GM12878 (cell line): ENCODE measurements at regions of chr2 and their contacts with region 1.

Region 1: DNA sequence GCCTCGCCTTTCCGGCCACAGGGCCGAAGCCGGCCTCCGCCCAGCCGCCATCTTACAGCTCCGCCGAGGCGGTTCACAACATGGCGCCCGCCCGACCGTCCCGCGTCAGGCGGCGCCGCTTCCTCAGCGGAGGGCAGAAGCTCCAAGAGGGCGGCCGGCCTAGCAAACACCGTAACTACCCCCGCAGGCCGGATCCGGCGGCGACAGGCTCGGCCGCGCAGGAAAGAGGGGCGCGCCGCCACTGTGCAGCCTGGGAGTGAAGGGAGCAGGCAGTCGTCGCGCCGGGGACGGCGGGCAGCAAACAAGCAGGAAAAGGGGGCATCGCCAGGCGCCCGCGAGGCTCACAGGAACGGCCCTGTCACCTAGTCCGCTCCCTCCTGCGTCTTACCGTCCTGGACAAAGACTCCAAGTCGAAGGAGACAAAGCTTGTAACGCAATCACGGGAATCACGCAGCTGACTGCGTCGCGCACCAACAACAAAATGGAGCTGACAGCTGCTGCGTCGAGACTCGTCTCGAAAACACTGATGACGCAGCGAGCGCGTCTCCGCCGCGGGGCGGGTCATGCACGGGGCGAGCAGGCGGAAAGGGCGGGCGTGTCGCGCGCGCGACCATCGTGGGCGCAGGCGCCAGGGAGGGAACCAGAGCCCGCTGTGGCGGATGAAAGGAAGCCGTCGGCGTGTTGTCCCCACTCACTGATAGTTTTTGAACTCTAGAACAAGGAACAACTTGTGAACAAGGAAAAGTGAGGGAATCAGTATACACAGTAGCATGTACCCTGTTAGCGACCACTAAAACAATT is at the start of gene CLK1:
- DNase-seq: peak; percentile 74
- ATAC-seq: peak; percentile 88
- H3K4me3 ChIP-seq: peak within 1 kb of the TSS; percentile 100
- H3K27ac ChIP-seq: peak within 1 kb of the TSS; percentile 100
- H3K4me1 ChIP-seq: no peaks in the 10 kb centered on the region
- H3K27me3 ChIP-seq: no peaks in the 10 kb centered on the region
- CTCF ChIP-seq: no peak
- EP300 ChIP-seq: 0 out of 4 replicates have a peak, but pooled peaks of 1 of the 2 experiments have one; percentile 52
- POLR2A ChIP-seq: peak; percentile 99
- RAD21 ChIP-seq: no peak
- polyA plus RNA-seq, gene CLK1: 95.6 to 138 TPM

Region 2: DNA sequence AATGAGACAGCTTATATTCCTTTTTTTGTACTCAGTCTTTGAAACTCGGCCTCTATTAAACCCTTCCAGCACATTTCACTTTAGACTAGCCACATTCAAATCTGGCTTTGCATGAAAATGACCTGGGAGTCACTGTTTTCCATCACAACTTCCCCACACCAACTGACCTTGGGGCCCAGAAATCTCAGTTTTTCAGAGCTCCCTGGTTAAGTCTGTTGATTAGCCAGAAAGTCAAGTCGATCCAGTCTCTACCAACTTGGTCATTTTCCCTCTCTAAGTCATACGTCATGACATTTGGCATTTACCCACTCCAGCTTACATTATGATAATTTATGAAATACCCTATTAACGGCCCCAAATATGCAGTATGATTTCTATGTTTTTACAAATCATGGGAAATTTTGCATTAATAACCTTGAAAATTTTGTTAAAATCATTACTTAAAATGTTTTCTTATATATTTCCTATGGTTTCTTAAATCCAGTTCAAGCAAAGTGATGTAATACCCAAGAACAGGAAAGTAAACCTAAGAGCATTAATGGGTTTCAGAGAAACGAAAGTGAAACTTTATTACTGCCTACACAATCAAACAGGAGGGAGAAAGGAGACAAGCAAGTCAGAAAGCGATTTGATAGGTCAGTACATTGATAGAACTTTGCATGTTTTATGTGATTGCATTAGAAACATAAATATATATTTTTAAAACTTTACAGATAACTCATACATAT is 480.8 kb before region 1 on chr2:
- CTCF ChIA-PET with region 1: no interaction called
- POLR2A ChIA-PET with region 1: no interaction called
- RAD21 ChIA-PET with region 1: no interaction called
- SMC1A ChIA-PET with region 1: no interaction called
- in situ Hi-C with region 1: no loop called
- intact Hi-C with region 1: no loop called
- DNase-seq: peak; percentile 60
- ATAC-seq: peak; percentile 93
- H3K4me3 ChIP-seq: no peak overlapping the region; the same call in 1 of the 2 replicates
- H3K27ac ChIP-seq: peak overlapping the region; percentile 76
- H3K4me1 ChIP-seq: peaks cover 23% of the 10 kb centered on the region
- H3K27me3 ChIP-seq: no peaks in the 10 kb centered on the region
- CTCF ChIP-seq: no peak
- EP300 ChIP-seq: no peak
- POLR2A ChIP-seq: no peak
- RAD21 ChIP-seq: no peak

Region 3: DNA sequence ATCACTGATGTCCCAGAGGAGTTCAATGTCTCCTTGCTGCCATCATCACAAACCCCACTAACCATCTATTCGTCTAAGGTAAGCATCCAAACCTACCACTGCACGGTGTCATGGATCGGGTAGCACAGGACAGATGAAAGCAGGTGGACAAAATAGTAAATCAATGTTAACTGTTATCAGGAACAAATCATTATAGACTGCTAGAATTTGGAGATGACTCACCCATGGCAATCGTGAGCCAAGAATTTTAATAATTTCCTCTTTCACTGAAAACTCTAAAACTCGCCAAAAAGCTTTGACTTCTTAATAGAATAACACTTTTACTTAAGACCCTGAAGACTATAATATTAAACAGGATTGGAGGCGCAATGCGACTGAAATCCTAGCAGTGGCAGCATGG is 86.3 kb before region 1 on chr2:
- CTCF ChIA-PET with region 1: no interaction called
- POLR2A ChIA-PET with region 1: no interaction called
- RAD21 ChIA-PET with region 1: no interaction called
- SMC1A ChIA-PET with region 1: no interaction called
- in situ Hi-C with region 1: no loop called
- intact Hi-C with region 1: no loop called
- DNase-seq: no peak
- ATAC-seq: no peak
- H3K4me3 ChIP-seq: no peak overlapping the region
- H3K27ac ChIP-seq: no peak overlapping the region
- H3K4me1 ChIP-seq: no peaks in the 10 kb centered on the region
- H3K27me3 ChIP-seq: peaks cover 0 to 3% of the 10 kb centered on the region in 2 experiments; a peak in 2 of 4 replicates
- CTCF ChIP-seq: no peak
- EP300 ChIP-seq: no peak
- POLR2A ChIP-seq: no peak
- RAD21 ChIP-seq: no peak

Region 4: DNA sequence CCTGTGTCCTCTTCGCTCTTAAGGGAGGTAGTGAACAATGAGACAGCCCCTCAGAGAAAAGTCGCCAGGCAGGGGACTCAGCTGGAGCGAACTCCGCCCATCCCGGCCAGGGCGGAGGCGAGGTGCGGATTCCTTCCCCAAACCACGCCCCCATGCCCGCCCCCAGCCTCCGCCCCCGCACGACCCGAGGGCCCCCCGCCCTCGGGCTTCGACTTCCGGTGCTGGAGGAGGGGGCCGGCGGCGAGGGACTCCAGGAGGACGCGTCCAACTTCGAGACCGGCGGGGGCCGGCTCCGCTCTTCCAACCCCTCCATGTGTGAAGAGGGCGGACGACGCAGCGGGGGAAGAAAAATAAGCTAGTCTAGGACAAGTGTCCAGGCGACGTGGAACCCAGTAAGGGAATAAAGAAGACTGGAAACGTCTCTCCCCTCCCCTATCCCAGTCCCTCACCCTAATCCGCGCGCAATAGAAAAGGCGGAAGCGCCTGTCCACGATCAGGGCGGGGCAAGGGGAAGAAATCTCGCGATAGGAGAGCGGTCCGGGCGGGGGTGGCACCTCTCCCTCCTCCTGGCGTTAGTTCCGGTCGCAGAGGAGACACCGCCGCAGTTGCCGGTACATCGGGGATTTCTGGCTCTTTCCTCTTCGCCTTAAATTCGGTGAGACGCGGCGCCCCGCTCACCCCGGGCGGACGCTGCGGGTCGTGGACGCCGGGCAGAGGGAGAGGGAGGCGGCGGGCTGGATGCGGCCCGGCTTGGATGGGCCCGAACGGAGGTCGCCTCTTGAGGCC is 52.8 kb before region 1 on chr2 and contains the start of gene BZW1:
- CTCF ChIA-PET with region 1: interaction called, 4 read pairs
- POLR2A ChIA-PET with region 1: interaction called, 11 read pairs
- RAD21 ChIA-PET with region 1: interaction called, 4 read pairs
- SMC1A ChIA-PET with region 1: interaction called, 9 read pairs
- in situ Hi-C with region 1: no loop called
- intact Hi-C with region 1: loop called (anchors 2 kb)
- DNase-seq: peak; percentile 88
- ATAC-seq: peak; percentile 86
- H3K4me3 ChIP-seq: peak within 1 kb of the TSS; percentile 88
- H3K27ac ChIP-seq: peak within 1 kb of the TSS; percentile 100
- H3K4me1 ChIP-seq: peaks cover 19% of the 10 kb centered on the region
- H3K27me3 ChIP-seq: no peaks in the 10 kb centered on the region
- CTCF ChIP-seq: no peak
- EP300 ChIP-seq: 0 out of 4 replicates have a peak, but pooled peaks of 1 of the 2 experiments have one; percentile 5
- POLR2A ChIP-seq: peak; percentile 90
- RAD21 ChIP-seq: no peak
- polyA plus RNA-seq, gene BZW1: 200 to 317 TPM

Region 5: GRCh38 chr2:200834701-200835100 is 29.7 kb before region 1 on chr2:
- CTCF ChIA-PET with region 1: no interaction called
- POLR2A ChIA-PET with region 1: no interaction called
- RAD21 ChIA-PET with region 1: no interaction called
- SMC1A ChIA-PET with region 1: no interaction called
- in situ Hi-C with region 1: no loop called
- intact Hi-C with region 1: no loop called
- DNase-seq: no peak
- ATAC-seq: no peak
- H3K4me3 ChIP-seq: no peak overlapping the region
- H3K27ac ChIP-seq: no peak overlapping the region
- H3K4me1 ChIP-seq: no peaks in the 10 kb centered on the region
- H3K27me3 ChIP-seq: no peaks in the 10 kb centered on the region
- CTCF ChIP-seq: no peak
- EP300 ChIP-seq: no peak
- POLR2A ChIP-seq: no peak
- RAD21 ChIP-seq: no peak

Region 6: GRCh38 chr2:200850512-200851256 is 13.7 kb before region 1 on chr2:
- CTCF ChIA-PET with region 1: interaction called, 3 read pairs
- POLR2A ChIA-PET with region 1: interaction called, 14 read pairs
- RAD21 ChIA-PET with region 1: no interaction called
- SMC1A ChIA-PET with region 1: interaction called, 8 read pairs
- in situ Hi-C with region 1: no loop called
- intact Hi-C with region 1: no loop called
- DNase-seq: no peak
- ATAC-seq: peak; percentile 11; the same call in 2 of the 3 replicates
- H3K4me3 ChIP-seq: no peak overlapping the region
- H3K27ac ChIP-seq: no peak overlapping the region
- H3K4me1 ChIP-seq: no peaks in the 10 kb centered on the region
- H3K27me3 ChIP-seq: no peaks in the 10 kb centered on the region
- CTCF ChIP-seq: no peak
- EP300 ChIP-seq: no peak
- POLR2A ChIP-seq: no peak; the same call in 1 of the 2 replicates
- RAD21 ChIP-seq: no peak

Region 7: DNA sequence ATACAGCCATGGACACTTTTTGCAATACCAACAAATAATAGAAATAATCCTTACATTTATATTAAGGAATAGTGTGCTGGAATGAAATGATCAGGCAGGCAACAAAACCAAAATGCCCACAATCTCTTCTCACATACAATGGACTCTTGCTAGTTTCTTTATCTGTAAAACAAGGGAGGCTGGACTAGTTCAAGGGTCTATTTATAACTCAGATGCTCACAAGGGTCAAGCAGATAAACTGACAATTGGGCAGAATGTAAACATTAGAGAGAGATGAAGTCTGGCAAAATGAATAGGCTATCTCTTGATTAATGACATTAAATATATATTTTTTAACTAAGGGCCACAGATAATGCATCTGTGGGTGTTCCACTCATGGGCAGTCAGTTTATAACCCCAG is 13.1 kb after region 1 on chr2:
- CTCF ChIA-PET with region 1: no interaction called
- POLR2A ChIA-PET with region 1: interaction called, 11 read pairs
- RAD21 ChIA-PET with region 1: no interaction called
- SMC1A ChIA-PET with region 1: no interaction called
- in situ Hi-C with region 1: no loop called
- intact Hi-C with region 1: no loop called
- DNase-seq: no peak
- ATAC-seq: no peak
- H3K4me3 ChIP-seq: no peak overlapping the region
- H3K27ac ChIP-seq: no peak overlapping the region
- H3K4me1 ChIP-seq: no peaks in the 10 kb centered on the region
- H3K27me3 ChIP-seq: no peaks in the 10 kb centered on the region
- CTCF ChIP-seq: no peak
- EP300 ChIP-seq: no peak
- POLR2A ChIP-seq: no peak
- RAD21 ChIP-seq: no peak

Region 8: GRCh38 chr2:200888704-200889625 is 24.6 kb after region 1 on chr2 and contains the starts of genes NIF3L1 and PPIL3:
- CTCF ChIA-PET with region 1: interaction called, 6 read pairs
- POLR2A ChIA-PET with region 1: interaction called, 20 read pairs
- RAD21 ChIA-PET with region 1: interaction called, 3 read pairs
- SMC1A ChIA-PET with region 1: interaction called, 12 read pairs
- in situ Hi-C with region 1: no loop called
- intact Hi-C with region 1: loop called (anchors 2 kb)
- DNase-seq: peak; percentile 97
- ATAC-seq: peak; percentile 92
- H3K4me3 ChIP-seq: peak within 1 kb of the TSS; percentile 84
- H3K27ac ChIP-seq: peak within 1 kb of the TSS; percentile 85
- H3K4me1 ChIP-seq: peaks cover 11% of the 10 kb centered on the region
- H3K27me3 ChIP-seq: no peaks in the 10 kb centered on the region
- CTCF ChIP-seq: no peak
- EP300 ChIP-seq: peak in 1 of 2 experiments; percentile 64; a peak in 2 of 4 replicates
- POLR2A ChIP-seq: peak; percentile 82
- RAD21 ChIP-seq: no peak
- polyA plus RNA-seq, gene NIF3L1: 58.3 to 88.2 TPM
- polyA plus RNA-seq, gene PPIL3: 71.2 to 103 TPM

Region 9: GRCh38 chr2:202375609-202376408 is 1511.4 kb after region 1 on chr2 and contains the start of gene BMPR2:
- CTCF ChIA-PET with region 1: no interaction called
- POLR2A ChIA-PET with region 1: no interaction called
- RAD21 ChIA-PET with region 1: no interaction called
- SMC1A ChIA-PET with region 1: no interaction called
- in situ Hi-C with region 1: no loop called
- intact Hi-C with region 1: loop called (anchors 10 kb)
- DNase-seq: no peak
- ATAC-seq: peak; percentile 76
- H3K4me3 ChIP-seq: peak within 1 kb of the TSS; percentile 76
- H3K27ac ChIP-seq: peak within 1 kb of the TSS; percentile 75
- H3K4me1 ChIP-seq: peaks cover 5% of the 10 kb centered on the region; the same call in 1 of the 2 replicates
- H3K27me3 ChIP-seq: no peaks in the 10 kb centered on the region
- CTCF ChIP-seq: no peak
- EP300 ChIP-seq: no peak
- POLR2A ChIP-seq: peak; percentile 91
- RAD21 ChIP-seq: no peak
- polyA plus RNA-seq, gene BMPR2: 2.4 to 3.4 TPM